MCF 10A (cell line): ENCODE measurements at regions of chr12 and their contacts with region 1.

Region 1: GRCh38 chr12:103877934-103878510 is 37.0 kb upstream of the NT5DC3 start:
- DNase-seq: peak; percentile 88
- H3K4me3 Mint-ChIP-seq: no peak overlapping the region
- H3K27ac Mint-ChIP-seq: no peak overlapping the region
- H3K4me1 Mint-ChIP-seq: peaks cover 6% of the 10 kb centered on the region
- H3K27me3 Mint-ChIP-seq: no peaks in the 10 kb centered on the region
- CTCF ChIP-seq: peak; percentile 58

Region 2: GRCh38 chr12:103858953-103859601 is 18.9 kb before region 1 on chr12:
- CTCF ChIA-PET with region 1: interaction called, 11 read pairs
- POLR2A ChIA-PET with region 1: no interaction called
- intact Hi-C with region 1: no loop called
- DNase-seq: peak; percentile 89
- H3K4me3 Mint-ChIP-seq: peak overlapping the region; percentile 35
- H3K27ac Mint-ChIP-seq: peak overlapping the region; percentile 100
- H3K4me1 Mint-ChIP-seq: peaks cover 26% of the 10 kb centered on the region
- H3K27me3 Mint-ChIP-seq: no peaks in the 10 kb centered on the region
- CTCF ChIP-seq: no peak

Region 3: DNA sequence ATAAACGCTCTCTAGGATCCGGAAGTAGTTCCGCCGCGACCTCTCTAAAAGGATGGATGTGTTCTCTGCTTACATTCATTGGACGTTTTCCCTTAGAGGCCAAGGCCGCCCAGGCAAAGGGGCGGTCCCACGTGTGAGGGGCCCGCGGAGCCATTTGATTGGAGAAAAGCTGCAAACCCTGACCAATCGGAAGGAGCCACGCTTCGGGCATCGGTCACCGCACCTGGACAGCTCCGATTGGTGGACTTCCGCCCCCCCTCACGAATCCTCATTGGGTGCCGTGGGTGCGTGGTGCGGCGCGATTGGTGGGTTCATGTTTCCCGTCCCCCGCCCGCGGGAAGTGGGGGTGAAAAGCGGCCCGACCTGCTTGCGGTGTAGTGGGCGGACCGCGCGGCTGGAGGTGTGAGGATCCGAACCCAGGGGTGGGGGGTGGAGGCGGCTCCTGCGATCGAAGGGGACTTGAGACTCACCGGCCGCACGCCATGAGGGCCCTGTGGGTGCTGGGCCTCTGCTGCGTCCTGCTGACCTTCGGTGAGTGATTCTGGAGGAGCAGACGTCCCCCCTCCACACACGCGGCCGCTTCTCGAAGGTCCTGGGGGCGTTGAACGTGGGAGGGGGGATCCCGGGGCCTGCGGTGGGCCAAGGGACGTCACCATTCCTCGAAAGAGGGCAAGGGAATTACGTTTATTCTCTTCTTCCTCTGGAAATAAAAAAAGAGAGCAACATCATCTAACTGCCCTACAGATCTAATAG is 52.2 kb after region 1 on chr12 and contains the start of gene HSP90B1:
- CTCF ChIA-PET with region 1: interaction called, 4 read pairs
- POLR2A ChIA-PET with region 1: interaction called, 3 read pairs
- intact Hi-C with region 1: loop called (anchors 2 kb)
- DNase-seq: peak; percentile 100
- H3K4me3 Mint-ChIP-seq: peak within 1 kb of the TSS; percentile 75
- H3K27ac Mint-ChIP-seq: peak within 1 kb of the TSS; percentile 58
- H3K4me1 Mint-ChIP-seq: peaks cover 23% of the 10 kb centered on the region
- H3K27me3 Mint-ChIP-seq: no peaks in the 10 kb centered on the region
- CTCF ChIP-seq: no peak
- total RNA-seq, gene HSP90B1: 1,052 and 1,334 TPM in 2 replicates

Region 4: DNA sequence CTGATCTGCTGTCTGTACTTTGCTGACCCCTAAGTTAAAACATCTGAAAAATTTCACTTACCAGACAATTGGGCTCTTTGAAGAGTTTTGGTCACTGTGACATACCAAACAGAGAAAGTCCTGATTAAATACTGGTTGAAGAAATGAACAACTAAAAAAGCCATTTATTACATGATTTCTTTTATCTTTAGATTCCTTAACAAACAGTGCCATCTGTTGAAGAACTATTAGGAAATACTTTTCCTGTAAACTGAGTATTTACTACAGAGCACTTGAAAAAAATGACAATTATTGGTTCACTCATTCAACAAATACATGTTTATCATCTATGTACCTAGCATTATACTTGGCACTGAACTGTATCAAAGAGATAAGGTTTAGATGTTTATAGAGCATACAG is 1223.0 kb after region 1 on chr12:
- CTCF ChIA-PET with region 1: no interaction called
- POLR2A ChIA-PET with region 1: no interaction called
- intact Hi-C with region 1: loop called (anchors 5 kb)
- DNase-seq: no peak
- H3K4me3 Mint-ChIP-seq: no peak overlapping the region
- H3K27ac Mint-ChIP-seq: peak overlapping the region; percentile 85
- H3K4me1 Mint-ChIP-seq: peaks cover 12% of the 10 kb centered on the region
- H3K27me3 Mint-ChIP-seq: no peaks in the 10 kb centered on the region
- CTCF ChIP-seq: peak; percentile 24